Activated CD4-positive, alpha-beta T cell treated with anti-CD3 and anti-CD28 coated beads for 36 hours (primary cell): ENCODE measurements at regions of chr4 and their contacts with region 1.

Region 1: DNA sequence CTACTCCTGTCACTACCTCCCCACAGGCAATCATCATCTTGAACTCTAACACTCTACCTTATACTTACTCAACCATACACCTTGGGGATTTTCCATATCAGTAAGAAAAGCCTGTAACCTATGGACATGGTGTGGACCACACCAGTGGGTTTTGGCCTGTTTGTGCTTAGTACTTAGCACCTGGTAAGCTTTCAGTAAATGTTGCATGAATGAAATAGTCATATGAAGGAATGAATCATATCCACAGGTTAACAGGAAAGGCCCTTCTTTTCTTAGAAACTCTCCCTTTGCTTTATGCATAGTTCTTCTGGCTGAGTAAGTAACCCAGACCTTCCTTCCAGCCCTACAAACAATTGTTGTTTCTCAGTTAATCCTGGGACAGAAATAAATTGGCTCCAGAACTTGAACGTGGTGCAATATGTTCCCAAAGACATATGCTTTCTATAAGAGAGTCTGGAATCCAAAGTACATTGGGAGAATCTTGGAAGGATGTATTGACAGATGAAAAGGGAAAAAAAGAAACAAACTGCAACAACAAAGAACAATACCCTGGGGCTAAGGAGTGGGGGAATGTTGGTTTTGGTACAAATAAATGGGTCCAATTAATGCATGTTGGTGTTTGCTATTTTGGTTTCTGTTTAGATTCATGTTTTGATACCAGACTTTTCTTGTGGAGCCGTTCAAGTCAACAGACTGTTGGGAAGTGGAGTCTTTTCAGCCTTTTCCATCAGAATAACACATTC is 27.8 kb downstream of the RASL11B start:
- DNase-seq: peak; percentile 44
- ATAC-seq: peak; percentile 89
- H3K4me3 Mint-ChIP-seq: no peak overlapping the region
- H3K27ac Mint-ChIP-seq: peak overlapping the region; percentile 62
- H3K4me1 Mint-ChIP-seq: peaks cover 17% of the 10 kb centered on the region
- H3K27me3 Mint-ChIP-seq: no peaks in the 10 kb centered on the region

Region 2: GRCh38 chr4:52550186-52550585 is 339.8 kb before region 1 on chr4:
- CTCF ChIA-PET with region 1: no interaction called
- POLR2A ChIA-PET with region 1: no interaction called
- intact Hi-C with region 1: no loop called
- DNase-seq: no peak
- ATAC-seq: no peak
- H3K4me3 Mint-ChIP-seq: no peak overlapping the region
- H3K27ac Mint-ChIP-seq: no peak overlapping the region
- H3K4me1 Mint-ChIP-seq: peaks cover 2% of the 10 kb centered on the region
- H3K27me3 Mint-ChIP-seq: peaks cover 11% of the 10 kb centered on the region

Region 3: GRCh38 chr4:52780206-52780605 is 109.7 kb before region 1 on chr4:
- CTCF ChIA-PET with region 1: no interaction called
- POLR2A ChIA-PET with region 1: no interaction called
- intact Hi-C with region 1: no loop called
- DNase-seq: no peak
- ATAC-seq: no peak
- H3K4me3 Mint-ChIP-seq: no peak overlapping the region
- H3K27ac Mint-ChIP-seq: no peak overlapping the region
- H3K4me1 Mint-ChIP-seq: no peaks in the 10 kb centered on the region
- H3K27me3 Mint-ChIP-seq: peaks cover 15% of the 10 kb centered on the region

Region 4: DNA sequence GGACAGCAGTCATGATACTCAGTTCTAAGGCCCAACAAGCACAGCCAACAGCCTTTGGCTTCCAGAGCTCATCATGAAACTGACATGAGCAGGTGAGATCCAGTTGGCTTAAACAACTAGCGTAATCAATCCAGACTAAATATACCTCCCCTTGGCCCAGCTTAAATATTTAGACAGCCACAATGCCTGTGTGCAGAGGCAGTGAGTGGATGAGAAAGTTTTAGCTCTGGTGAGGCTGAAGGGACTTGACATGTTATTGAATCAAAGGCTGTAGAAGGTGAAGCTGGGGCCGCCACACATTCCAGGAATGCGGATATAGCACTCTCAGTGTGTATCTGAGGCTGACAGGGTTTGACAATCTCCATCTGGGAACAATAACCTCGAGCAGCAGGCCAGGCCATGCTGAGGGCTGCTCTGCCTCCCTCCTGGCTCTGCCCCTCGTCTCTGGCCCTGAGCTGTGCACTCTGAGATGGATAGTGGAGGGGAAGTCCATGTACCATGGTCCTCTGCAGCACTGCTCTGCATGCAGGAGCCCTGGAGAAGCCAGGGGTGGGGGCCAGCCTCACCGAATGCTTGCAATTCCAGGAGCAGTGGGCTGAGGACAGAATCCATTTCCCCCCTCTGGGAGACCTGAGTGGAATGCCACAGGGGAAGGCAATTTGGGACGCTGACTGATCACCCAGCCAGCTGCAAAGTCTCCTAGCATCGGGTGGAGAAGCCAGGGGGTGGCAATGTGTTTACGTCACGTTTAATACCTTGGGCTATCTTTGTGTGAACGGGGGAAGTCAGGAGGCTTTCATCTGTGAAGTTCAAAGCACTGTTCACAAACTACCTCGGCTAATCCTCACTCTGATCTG is 65.1 kb before region 1 on chr4:
- CTCF ChIA-PET with region 1: no interaction called
- POLR2A ChIA-PET with region 1: no interaction called
- intact Hi-C with region 1: loop called in 1 of 2 experiments (anchors 5 kb)
- DNase-seq: no peak
- ATAC-seq: no peak
- H3K4me3 Mint-ChIP-seq: no peak overlapping the region
- H3K27ac Mint-ChIP-seq: peak overlapping the region; percentile 41
- H3K4me1 Mint-ChIP-seq: peaks cover 37% of the 10 kb centered on the region
- H3K27me3 Mint-ChIP-seq: no peaks in the 10 kb centered on the region

Region 5: GRCh38 chr4:52837726-52838558 is 52.0 kb before region 1 on chr4:
- CTCF ChIA-PET with region 1: no interaction called
- POLR2A ChIA-PET with region 1: no interaction called
- intact Hi-C with region 1: no loop called
- DNase-seq: no peak
- ATAC-seq: no peak
- H3K4me3 Mint-ChIP-seq: no peak overlapping the region
- H3K27ac Mint-ChIP-seq: no peak overlapping the region
- H3K4me1 Mint-ChIP-seq: no peaks in the 10 kb centered on the region
- H3K27me3 Mint-ChIP-seq: no peaks in the 10 kb centered on the region